ENCODE measurements at regions of chr11 and their contacts with region 1.

Region 1: GRCh38 chr11:46352063-46352841 is 5.0 kb downstream of the DGKZ start:
- DNase-seq: peak; percentile 82
- H3K4me3 Mint-ChIP-seq: peak overlapping the region; percentile 69
- H3K27ac Mint-ChIP-seq: peak overlapping the region; percentile 78
- H3K4me1 Mint-ChIP-seq: peaks cover 73% of the 10 kb centered on the region
- H3K27me3 Mint-ChIP-seq: no peaks in the 10 kb centered on the region

Region 2: DNA sequence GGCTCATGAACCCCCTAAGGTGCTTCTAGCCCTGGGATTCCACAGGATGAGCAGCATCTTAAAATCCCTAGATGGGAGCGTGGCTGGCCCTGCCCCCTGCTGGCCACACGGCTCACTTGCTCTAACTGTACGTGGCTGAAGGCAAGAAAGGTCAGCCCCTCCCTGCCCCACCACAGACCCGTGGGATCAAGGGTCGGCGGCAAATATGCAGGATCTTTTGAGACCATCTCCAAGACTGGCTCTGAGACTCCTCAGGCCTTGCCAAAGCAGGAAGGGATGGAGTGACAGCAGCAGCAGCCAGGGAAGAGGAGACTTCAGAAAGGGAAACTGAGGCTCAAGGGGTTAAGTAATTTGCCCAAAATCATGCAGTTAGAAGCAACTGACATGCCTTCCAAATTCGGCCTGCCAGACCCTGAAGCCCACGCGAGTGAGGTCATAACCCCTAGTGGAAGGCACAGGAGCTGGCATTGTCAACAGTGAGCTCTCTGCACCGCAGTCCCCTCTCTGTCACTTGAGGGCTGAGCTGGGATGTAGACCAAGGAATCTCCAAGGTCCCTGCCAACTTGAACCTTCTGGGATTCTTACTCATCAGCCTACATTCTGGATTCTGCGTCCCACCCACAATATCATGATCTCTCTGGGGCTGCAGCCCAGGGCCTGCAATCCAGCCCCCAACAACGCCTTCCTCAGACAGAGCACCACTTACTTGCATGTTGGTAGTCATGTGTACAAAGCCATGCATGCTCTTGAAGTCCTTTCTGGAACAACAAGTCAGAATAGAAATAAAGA is 43.4 kb before region 1 on chr11:
- CTCF ChIA-PET with region 1: interaction called, 10 read pairs
- DNase-seq: peak; percentile 78
- H3K4me3 Mint-ChIP-seq: no peak overlapping the region
- H3K27ac Mint-ChIP-seq: no peak overlapping the region
- H3K4me1 Mint-ChIP-seq: peaks cover 20% of the 10 kb centered on the region
- H3K27me3 Mint-ChIP-seq: peaks cover 24% of the 10 kb centered on the region

Region 3: DNA sequence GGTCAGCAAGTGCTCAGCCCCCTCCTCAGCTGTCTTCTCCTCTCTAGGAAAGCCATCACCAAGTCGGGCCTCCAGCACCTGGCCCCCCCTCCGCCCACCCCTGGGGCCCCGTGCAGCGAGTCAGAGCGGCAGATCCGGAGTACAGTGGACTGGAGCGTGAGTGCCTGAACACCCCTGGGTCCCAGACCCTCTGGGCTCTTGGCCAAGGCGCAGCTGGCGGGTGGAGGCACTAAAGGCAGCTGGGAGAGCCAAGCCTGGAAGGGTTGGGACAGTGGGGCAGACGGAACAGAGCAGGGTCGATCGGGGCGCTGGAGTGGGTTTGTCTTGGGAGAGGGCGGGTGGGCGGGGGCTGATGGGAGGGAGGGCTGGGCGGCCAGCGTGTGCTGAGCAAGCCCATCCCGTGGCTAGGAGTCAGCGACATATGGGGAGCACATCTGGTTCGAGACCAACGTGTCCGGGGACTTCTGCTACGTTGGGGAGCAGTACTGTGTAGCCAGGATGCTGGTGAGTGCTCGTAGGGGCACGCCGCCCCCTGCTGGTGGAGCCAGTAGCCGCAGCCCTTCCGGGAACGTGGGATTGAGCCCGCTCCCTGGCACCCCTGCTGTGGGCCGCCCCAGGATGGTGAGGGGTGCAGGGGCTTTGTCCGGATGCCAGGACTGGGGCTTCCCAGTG is 15.1 kb after region 1 on chr11:
- CTCF ChIA-PET with region 1: interaction called, 255 read pairs
- DNase-seq: peak; percentile 82
- H3K4me3 Mint-ChIP-seq: no peak overlapping the region
- H3K27ac Mint-ChIP-seq: peak overlapping the region; percentile 67
- H3K4me1 Mint-ChIP-seq: peaks cover 34% of the 10 kb centered on the region
- H3K27me3 Mint-ChIP-seq: no peaks in the 10 kb centered on the region

Region 4: GRCh38 chr11:46378811-46379481 is 26.7 kb after region 1 on chr11:
- CTCF ChIA-PET with region 1: interaction called, 16 read pairs
- DNase-seq: no peak
- H3K4me3 Mint-ChIP-seq: peak overlapping the region; percentile 38
- H3K27ac Mint-ChIP-seq: no peak overlapping the region
- H3K4me1 Mint-ChIP-seq: peaks cover 18% of the 10 kb centered on the region
- H3K27me3 Mint-ChIP-seq: peaks cover 33% of the 10 kb centered on the region